Left colon (tissue), 2 donors: ENCODE measurements at regions of chr1 and their contacts with region 1.

Region 1: DNA sequence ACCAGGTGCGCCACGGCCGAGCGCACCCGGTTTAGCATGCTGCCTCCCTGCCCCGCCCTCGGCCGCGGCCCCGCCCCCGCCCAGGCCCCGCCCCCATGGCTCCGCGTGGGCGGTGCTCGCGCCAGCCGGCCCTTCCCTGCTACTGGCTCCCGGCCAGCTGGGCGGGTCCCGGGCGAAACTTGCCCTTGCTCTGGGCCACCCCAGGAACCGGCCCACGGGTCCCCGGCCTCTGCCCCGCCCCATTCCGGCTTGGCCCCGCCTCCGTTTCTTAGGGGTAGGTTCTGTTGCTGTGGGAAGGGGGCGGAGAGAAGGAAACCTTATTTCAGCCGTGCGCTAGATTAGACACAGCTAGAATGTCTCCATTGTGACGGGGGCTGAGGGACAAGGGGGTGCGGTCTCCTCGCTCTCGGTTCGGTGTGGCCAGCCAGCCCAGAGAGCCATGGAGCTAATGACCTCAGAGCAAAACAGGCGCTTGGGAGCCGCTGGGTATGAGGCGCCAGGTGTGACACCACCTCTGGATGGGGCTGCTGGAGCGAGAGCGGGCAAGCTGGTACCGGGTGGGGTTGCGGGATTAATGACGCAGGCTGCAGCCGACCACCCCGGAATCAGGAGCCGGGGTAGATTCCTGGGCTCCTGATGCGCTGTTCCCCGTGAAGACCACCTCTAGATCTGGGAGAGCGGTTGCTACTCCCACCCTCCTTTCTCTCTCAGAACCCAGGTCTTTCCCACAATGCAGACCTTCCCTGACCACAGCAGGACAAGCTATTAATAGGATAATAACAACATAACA is at the start of gene PPM1J:
- DNase-seq: peak; percentile 98 to 100
- ATAC-seq: peak; percentile 83
- total RNA-seq, gene PPM1J: 1.1 to 1.2 TPM

Region 2: DNA sequence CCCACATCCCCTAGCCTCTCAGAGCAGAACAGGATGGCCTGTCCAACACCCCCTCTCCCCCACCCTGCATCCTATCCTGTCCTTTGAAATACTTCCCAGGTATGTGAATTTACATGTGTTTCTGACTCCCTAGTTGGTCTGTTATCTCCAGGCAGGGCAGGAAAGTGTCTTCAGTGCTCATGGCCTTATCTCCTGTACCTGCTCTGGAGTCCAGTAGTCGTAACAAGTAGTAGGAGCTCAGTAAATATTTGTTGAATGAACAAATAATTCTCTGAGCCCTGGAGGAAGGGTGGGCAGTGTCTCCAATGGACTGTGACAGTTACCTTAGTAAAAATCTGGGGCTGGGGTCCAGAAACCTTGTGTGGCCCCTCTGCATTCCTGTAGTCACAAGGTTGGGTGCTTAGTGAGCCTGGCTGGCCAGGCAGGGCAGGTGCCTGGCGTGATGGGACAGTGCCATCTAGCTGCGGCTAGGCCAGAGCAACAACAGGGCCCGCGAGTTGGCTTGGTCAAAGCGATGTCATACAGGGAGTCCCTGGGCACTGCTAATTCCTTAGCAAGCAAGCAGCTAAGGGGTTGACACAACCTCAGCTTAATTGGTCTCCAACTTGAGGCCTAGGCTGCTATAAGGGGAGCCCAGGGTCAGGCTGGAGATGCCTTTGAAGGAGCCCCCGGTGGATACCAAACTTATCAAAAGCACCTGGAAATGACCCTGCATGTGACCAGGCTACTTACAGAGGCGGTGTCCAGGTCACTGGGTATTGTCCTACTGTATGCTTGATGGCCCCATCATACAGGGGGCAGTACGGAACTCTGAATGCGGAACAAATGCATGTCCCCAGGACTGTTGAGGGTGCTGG is 88.7 kb after region 1 on chr1:
- intact Hi-C with region 1: loop called (anchors 2 to 10 kb)
- DNase-seq: peak; percentile 46 to 79
- ATAC-seq: peak; percentile 97